Natural killer cell (primary cell): ENCODE measurements at regions of chr3 and their contacts with region 1.

Region 1: DNA sequence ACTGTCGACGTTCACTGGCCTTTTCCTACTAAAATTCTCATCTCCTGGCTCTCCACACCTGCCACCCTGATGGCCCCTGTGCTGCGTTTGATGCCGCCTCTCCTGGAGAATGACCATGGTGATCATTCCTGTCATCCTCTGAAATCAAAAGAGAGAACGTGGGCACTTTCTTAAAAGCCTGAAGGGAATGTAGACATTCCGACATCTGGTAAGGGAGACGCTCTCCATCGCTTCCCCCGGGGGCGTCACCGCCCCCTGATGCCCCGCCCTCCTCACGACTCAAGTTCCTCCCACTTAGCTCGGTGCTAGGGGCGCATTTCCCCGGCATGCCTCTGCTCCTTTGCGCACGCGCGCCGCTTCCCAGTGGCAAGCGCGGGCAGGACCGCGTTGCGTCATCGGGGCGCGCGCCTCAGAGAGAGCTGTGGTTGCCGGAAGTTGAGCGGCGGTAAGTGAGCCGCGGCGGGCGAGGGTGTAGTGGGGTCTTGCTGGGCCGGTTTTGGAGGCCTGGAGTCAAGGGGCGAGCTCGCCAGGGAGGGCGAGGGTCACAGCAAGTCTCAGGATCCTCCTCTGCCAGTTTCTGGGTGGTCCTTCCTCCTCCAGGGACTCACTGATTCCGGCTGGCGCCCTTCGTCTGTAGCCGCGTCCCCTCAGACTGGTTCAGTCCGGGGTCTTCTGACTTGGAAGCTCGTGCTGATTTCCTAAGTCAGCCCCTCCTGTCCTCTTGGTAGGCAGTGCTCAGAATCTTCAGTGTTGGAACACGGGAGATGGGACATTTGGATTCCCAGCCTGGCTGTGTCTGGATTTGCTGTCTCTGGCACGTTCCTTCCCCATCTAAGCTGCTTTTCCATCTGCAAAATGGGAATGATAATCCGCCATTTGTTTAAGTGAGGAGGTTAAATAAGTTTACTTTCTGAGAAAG is at the start of gene ATG7:
- DNase-seq: peak; percentile 98 to 99
- ATAC-seq: peak; percentile 93 to 97 (median 93)
- H3K4me3 ChIP-seq: peak within 1 kb of the TSS; percentile 87
- H3K4me3 Mint-ChIP-seq: peak within 1 kb of the TSS; percentile 96
- H3K27ac ChIP-seq: peak within 1 kb of the TSS; percentile 91
- H3K27ac Mint-ChIP-seq: peak within 1 kb of the TSS; percentile 97
- H3K4me1 ChIP-seq: peaks cover 23% of the 10 kb centered on the region
- H3K4me1 Mint-ChIP-seq: peaks cover 31 to 48% of the 10 kb centered on the region in 2 donors
- H3K27me3 ChIP-seq: no peaks in the 10 kb centered on the region
- H3K27me3 Mint-ChIP-seq: peaks cover 3 to 4% of the 10 kb centered on the region in 2 donors
- CTCF ChIP-seq: no peak
- total RNA-seq, gene ATG7: 55.3 to 72.9 (median 68.6) TPM

Region 2: DNA sequence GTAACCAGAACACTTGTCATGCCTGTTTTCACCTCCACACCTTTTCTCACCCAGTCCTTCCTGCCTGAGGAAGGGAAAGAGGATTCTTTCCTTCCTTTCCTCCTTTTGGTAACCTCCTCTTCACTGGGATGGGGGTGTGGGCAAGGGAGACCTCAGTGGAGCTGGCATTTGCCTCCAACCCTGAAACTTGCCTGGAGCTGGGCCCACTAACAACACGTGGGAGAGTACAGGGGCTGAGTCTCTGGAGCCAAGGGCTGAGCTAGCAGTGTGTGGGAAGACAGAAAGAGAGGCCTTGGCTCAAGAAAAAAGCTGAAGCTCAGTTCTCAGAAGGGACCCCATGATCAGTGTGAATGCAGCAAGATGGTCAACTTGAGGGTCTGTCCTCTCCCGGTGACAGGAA is 542.8 kb before region 1 on chr3:
- intact Hi-C with region 1: no loop called
- DNase-seq: no peak
- ATAC-seq: no peak
- H3K4me3 ChIP-seq: no peak overlapping the region
- H3K4me3 Mint-ChIP-seq: no peak overlapping the region
- H3K27ac ChIP-seq: no peak overlapping the region
- H3K27ac Mint-ChIP-seq: no peak overlapping the region
- H3K4me1 ChIP-seq: no peaks in the 10 kb centered on the region
- H3K4me1 Mint-ChIP-seq: no peaks in the 10 kb centered on the region
- H3K27me3 ChIP-seq: no peaks in the 10 kb centered on the region
- H3K27me3 Mint-ChIP-seq: peaks cover 22 to 38% of the 10 kb centered on the region in 2 donors
- CTCF ChIP-seq: no peak

Region 3: DNA sequence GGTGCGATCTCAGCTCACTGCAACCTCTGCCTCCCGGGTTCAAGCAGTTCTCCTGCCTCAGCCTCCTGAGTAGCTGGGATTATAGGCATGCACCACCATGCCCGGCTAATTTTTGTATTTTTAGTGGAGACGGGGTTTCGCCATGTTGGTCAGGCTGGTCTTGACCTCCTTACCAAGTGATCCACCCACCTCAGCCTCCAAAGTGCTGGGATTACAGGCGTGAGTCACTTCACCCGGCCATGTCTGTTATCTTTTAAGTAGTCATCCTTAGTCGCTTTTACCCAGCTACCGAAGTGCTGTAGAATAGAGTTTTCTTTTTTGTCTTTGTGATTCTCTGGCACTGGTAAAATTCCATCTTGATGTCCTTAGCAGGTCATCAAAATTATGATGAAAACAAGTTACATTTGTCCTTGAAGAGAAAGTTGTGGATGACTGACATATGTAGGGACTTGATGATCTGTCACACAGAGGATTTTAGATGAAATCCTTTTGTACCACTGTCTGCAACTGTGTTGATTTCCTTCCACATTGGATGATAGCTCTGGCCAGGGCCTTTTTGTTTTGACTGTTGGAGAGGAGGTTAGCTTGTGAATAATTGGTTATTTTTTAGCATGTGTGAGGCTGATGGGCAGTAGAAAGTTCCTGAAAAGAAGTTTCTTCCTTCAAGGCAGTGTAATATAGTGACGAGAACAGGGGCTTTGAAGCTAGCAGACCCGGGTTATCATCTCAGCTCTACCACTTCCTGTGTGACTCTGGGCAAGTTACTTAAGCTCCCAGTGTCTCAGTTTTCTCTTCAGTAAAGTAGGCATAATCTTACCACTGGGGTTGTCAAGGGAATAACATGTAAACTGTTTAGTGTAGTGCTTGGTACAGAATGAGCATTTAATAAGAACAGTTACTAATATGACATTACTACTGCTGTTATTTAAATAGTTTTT is 18.8 kb after region 1 on chr3:
- intact Hi-C with region 1: loop called (anchors 1 kb)
- DNase-seq: peak; percentile 34 to 77
- ATAC-seq: peak; percentile 83 to 93 (median 92)
- H3K4me3 ChIP-seq: no peak overlapping the region
- H3K4me3 Mint-ChIP-seq: peak overlapping the region; percentile 74
- H3K27ac ChIP-seq: peak overlapping the region; percentile 89
- H3K27ac Mint-ChIP-seq: peak overlapping the region; percentile 94
- H3K4me1 ChIP-seq: peaks cover 36% of the 10 kb centered on the region
- H3K4me1 Mint-ChIP-seq: peaks cover 57 to 61% of the 10 kb centered on the region in 2 donors
- H3K27me3 ChIP-seq: no peaks in the 10 kb centered on the region
- H3K27me3 Mint-ChIP-seq: no peaks in the 10 kb centered on the region
- CTCF ChIP-seq: no peak

Region 4: GRCh38 chr3:11300970-11301369 is 28.7 kb after region 1 on chr3:
- intact Hi-C with region 1: loop called (anchors 1 kb)
- DNase-seq: peak in 1 of 2 donors; percentile 48
- ATAC-seq: peak; percentile 96 to 98 (median 96)
- H3K4me3 ChIP-seq: no peak overlapping the region
- H3K4me3 Mint-ChIP-seq: peak overlapping the region; percentile 59
- H3K27ac ChIP-seq: peak overlapping the region; percentile 84
- H3K27ac Mint-ChIP-seq: peak overlapping the region; percentile 90 to 92
- H3K4me1 ChIP-seq: peaks cover 8% of the 10 kb centered on the region
- H3K4me1 Mint-ChIP-seq: peaks cover 42 to 44% of the 10 kb centered on the region in 2 donors
- H3K27me3 ChIP-seq: no peaks in the 10 kb centered on the region
- H3K27me3 Mint-ChIP-seq: no peaks in the 10 kb centered on the region
- CTCF ChIP-seq: no peak